ENCODE measurements at regions of chr7 and their contacts with region 1.

Region 1: GRCh38 chr7:33243319-33243881 is 114.0 kb downstream of the BBS9 start:
- DNase-seq: no peak
- ATAC-seq: peak; percentile 38

Region 2: GRCh38 chr7:33444511-33444910 is 201.1 kb after region 1 on chr7:
- intact Hi-C with region 1: no loop called
- DNase-seq: no peak
- ATAC-seq: no peak

Region 3: GRCh38 chr7:33744293-33745075 is 501.1 kb after region 1 on chr7:
- intact Hi-C with region 1: loop called in 1 of 2 experiments (anchors 10 kb)
- DNase-seq: no peak
- ATAC-seq: peak; percentile 72

Region 4: DNA sequence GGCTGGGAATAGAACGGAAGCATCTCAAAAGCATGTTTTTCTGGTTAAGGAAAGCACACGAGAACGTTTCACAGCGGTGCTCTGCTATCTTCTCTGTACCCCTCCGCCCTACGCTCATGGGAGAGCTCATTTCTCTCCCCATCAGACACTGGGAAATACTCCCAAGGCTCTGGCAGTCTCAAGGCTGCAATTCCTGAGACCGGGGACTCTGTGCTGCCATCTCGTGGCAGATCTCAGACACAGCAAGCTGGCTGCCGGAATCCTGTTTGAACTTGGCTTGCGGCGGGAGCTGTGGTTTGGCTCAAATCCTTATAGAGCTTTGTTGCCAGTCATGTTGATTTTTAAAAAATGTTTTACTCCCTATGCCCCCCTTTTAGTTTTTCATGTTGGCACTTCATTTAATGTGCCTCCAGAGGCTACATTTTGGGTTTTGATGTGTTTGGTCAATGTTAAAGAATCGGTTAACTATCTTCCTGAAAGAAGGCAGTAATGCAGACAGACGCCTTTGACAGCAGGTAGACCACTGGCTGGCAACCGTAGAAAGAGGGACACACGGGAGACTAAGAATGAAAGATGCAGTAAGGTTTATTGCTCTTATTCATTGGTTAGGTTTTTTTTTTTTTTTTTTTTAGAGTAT is 689.5 kb after region 1 on chr7:
- intact Hi-C with region 1: loop called in 1 of 2 experiments (anchors 10 kb)
- DNase-seq: peak; percentile 44 to 67
- ATAC-seq: peak; percentile 77